ENCODE measurements at regions of chr5 and their contacts with region 1.

Region 1: DNA sequence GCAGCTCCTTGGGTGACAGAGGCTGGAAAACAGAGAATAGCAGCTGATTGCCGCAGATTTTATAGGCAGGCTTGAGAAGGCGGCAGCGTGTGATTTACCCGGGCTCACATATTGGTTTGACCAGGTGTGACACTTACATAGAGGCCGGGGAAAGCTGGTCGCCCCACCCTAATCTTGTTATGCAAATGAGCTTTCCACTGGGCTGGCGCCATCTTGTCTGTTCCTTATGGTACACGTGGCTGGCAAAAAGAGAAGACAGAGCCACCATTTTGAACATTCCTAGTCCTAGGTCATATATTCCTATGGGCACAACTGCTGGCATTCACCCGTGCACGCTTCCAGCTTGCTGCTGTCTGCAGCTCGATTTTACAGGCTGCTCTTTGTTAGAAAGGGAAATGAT is 11.3 kb upstream of the SPZ1 start:
- DNase-seq: no peak
- ATAC-seq: no peak
- H3K4me3 ChIP-seq: no peak overlapping the region
- H3K4me3 Mint-ChIP-seq: no peak overlapping the region
- H3K27ac ChIP-seq: no peak overlapping the region
- H3K27ac Mint-ChIP-seq: no peak overlapping the region
- H3K4me1 ChIP-seq: no peaks in the 10 kb centered on the region
- H3K4me1 Mint-ChIP-seq: no peaks in the 10 kb centered on the region
- H3K27me3 ChIP-seq: no peaks in the 10 kb centered on the region
- H3K27me3 Mint-ChIP-seq: no peaks in the 10 kb centered on the region
- CTCF ChIP-seq: no peak

Region 2: GRCh38 chr5:79702606-79703382 is 605.7 kb before region 1 on chr5:
- CTCF ChIA-PET with region 1: no interaction called
- POLR2A ChIA-PET with region 1: no interaction called
- intact Hi-C with region 1: loop called in 1 of 2 experiments (anchors 10 kb)
- DNase-seq: peak in 7 of 9 experiments; percentile 5 to 55 (median 32)
- ATAC-seq: no peak
- H3K4me3 ChIP-seq: no peak overlapping the region
- H3K4me3 Mint-ChIP-seq: no peak overlapping the region
- H3K27ac ChIP-seq: no peak overlapping the region
- H3K27ac Mint-ChIP-seq: no peak overlapping the region
- H3K4me1 ChIP-seq: no peaks in the 10 kb centered on the region
- H3K4me1 Mint-ChIP-seq: no peaks in the 10 kb centered on the region
- H3K27me3 ChIP-seq: no peaks in the 10 kb centered on the region
- H3K27me3 Mint-ChIP-seq: no peaks in the 10 kb centered on the region
- CTCF ChIP-seq: peak; percentile 73

Region 3: DNA sequence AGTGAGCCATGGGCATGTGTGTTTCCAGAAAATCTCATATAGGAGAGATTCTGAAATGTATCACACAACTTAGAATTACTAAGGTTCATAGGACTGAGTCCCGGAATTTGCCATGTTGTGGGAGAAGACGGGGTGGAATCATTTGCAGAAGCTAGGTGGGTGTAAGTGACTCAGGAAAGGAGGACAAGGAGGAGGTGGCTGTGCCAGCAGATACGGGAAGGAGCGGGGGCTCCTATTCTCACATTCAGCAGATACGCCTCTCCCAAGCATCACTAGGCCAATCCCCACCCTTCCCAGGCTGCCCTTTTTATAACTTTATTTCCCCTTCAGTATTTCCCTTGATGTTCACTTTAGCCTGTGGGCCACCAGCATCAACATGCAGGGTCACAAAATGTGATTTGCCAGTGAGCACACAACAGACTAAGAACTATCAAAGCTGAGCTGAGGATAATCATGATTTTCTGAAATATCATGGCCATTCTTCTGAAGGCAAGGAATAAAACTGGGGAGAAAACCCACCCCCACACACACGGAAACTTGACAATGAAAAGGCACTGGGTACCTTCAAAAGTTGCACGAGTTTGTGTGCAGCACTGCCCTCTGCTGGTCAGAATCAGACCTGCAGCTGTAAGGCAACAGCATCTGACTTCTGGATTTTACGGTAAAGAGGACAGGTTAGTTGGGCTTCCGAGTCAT is 450.7 kb before region 1 on chr5:
- CTCF ChIA-PET with region 1: no interaction called
- POLR2A ChIA-PET with region 1: no interaction called
- intact Hi-C with region 1: loop called in 1 of 2 experiments (anchors 10 kb)
- DNase-seq: peak; percentile 56 to 85 (median 76)
- ATAC-seq: peak; percentile 58
- H3K4me3 ChIP-seq: no peak overlapping the region
- H3K4me3 Mint-ChIP-seq: no peak overlapping the region
- H3K27ac ChIP-seq: no peak overlapping the region
- H3K27ac Mint-ChIP-seq: no peak overlapping the region
- H3K4me1 ChIP-seq: peaks cover 5% of the 10 kb centered on the region
- H3K4me1 Mint-ChIP-seq: peaks cover 2% of the 10 kb centered on the region
- H3K27me3 ChIP-seq: no peaks in the 10 kb centered on the region
- H3K27me3 Mint-ChIP-seq: peaks cover 2% of the 10 kb centered on the region
- CTCF ChIP-seq: peak; percentile 96

Region 4: GRCh38 chr5:79924936-79925893 is 383.3 kb before region 1 on chr5:
- CTCF ChIA-PET with region 1: interaction called, 3 read pairs
- POLR2A ChIA-PET with region 1: no interaction called
- intact Hi-C with region 1: loop called in 1 of 2 experiments (anchors 2 kb)
- DNase-seq: peak in 3 of 9 experiments; percentile 8 to 38 (median 21)
- ATAC-seq: no peak
- H3K4me3 ChIP-seq: no peak overlapping the region
- H3K4me3 Mint-ChIP-seq: no peak overlapping the region
- H3K27ac ChIP-seq: no peak overlapping the region
- H3K27ac Mint-ChIP-seq: no peak overlapping the region
- H3K4me1 ChIP-seq: no peaks in the 10 kb centered on the region
- H3K4me1 Mint-ChIP-seq: no peaks in the 10 kb centered on the region
- H3K27me3 ChIP-seq: no peaks in the 10 kb centered on the region
- H3K27me3 Mint-ChIP-seq: no peaks in the 10 kb centered on the region
- CTCF ChIP-seq: peak; percentile 34

Region 5: DNA sequence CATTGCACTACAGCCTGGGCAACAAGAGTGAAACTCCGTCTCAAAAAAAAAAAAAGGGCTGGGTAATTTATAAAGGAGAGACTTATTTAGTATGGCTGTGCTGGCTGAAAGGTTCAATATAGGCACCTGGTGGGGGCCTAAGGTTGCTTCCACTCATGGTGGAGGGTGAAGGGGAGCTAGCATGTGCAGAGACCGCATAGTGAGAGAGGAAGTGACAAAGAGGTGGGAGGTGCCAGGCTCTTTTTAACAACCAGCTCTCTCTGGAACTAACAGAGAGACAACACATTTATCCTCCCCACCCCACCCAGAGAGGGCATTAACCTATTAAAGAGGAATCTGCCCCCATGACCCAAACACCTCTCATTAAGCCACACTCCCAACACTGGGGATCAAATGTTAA is 23.8 kb before region 1 on chr5:
- CTCF ChIA-PET with region 1: interaction called, 16 read pairs
- POLR2A ChIA-PET with region 1: no interaction called
- intact Hi-C with region 1: no loop called
- DNase-seq: peak in 6 of 9 experiments; percentile 19 to 56 (median 34)
- ATAC-seq: peak; percentile 90
- H3K4me3 ChIP-seq: no peak overlapping the region
- H3K4me3 Mint-ChIP-seq: no peak overlapping the region
- H3K27ac ChIP-seq: no peak overlapping the region
- H3K27ac Mint-ChIP-seq: no peak overlapping the region
- H3K4me1 ChIP-seq: peaks cover 10% of the 10 kb centered on the region
- H3K4me1 Mint-ChIP-seq: peaks cover 13% of the 10 kb centered on the region
- H3K27me3 ChIP-seq: no peaks in the 10 kb centered on the region
- H3K27me3 Mint-ChIP-seq: no peaks in the 10 kb centered on the region
- CTCF ChIP-seq: no peak

Region 6: GRCh38 chr5:80346055-80346454 is 37.5 kb after region 1 on chr5:
- CTCF ChIA-PET with region 1: no interaction called
- POLR2A ChIA-PET with region 1: no interaction called
- intact Hi-C with region 1: no loop called
- DNase-seq: peak in 8 of 9 experiments; percentile 3 to 56 (median 22)
- ATAC-seq: peak; percentile 57
- H3K4me3 ChIP-seq: no peak overlapping the region
- H3K4me3 Mint-ChIP-seq: no peak overlapping the region
- H3K27ac ChIP-seq: no peak overlapping the region
- H3K27ac Mint-ChIP-seq: no peak overlapping the region
- H3K4me1 ChIP-seq: no peaks in the 10 kb centered on the region
- H3K4me1 Mint-ChIP-seq: peaks cover 4% of the 10 kb centered on the region
- H3K27me3 ChIP-seq: no peaks in the 10 kb centered on the region
- H3K27me3 Mint-ChIP-seq: peaks cover 8% of the 10 kb centered on the region
- CTCF ChIP-seq: no peak

Region 7: DNA sequence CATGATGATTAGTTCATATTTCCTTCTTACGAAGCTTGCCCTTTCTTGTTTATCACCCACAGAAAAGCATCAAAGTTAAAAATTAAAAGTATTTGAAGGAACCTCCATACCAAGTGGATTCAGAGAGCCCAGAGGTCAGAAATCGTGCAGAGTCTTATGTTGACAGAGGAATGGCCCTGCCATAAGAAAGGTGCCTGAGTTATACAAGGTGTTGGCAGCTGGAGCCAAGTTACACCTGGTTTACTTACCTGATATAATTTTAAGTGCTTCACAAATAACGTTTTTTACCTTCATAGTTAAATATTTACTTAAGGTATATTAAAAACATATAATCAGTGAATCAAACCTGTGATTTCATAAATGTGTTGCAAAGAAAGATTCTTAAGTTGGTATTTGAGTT is 388.6 kb after region 1 on chr5:
- CTCF ChIA-PET with region 1: no interaction called
- POLR2A ChIA-PET with region 1: no interaction called
- intact Hi-C with region 1: no loop called
- DNase-seq: no peak
- ATAC-seq: no peak
- H3K4me3 ChIP-seq: no peak overlapping the region
- H3K4me3 Mint-ChIP-seq: no peak overlapping the region
- H3K27ac ChIP-seq: no peak overlapping the region
- H3K27ac Mint-ChIP-seq: no peak overlapping the region
- H3K4me1 ChIP-seq: no peaks in the 10 kb centered on the region
- H3K4me1 Mint-ChIP-seq: peaks cover 8% of the 10 kb centered on the region
- H3K27me3 ChIP-seq: no peaks in the 10 kb centered on the region
- H3K27me3 Mint-ChIP-seq: no peaks in the 10 kb centered on the region
- CTCF ChIP-seq: no peak